Lower leg skin (tissue), 4 donors: ENCODE measurements at regions of chr1 and their contacts with region 1.

Region 1: GRCh38 chr1:205834751-205835150 is 15.2 kb downstream of the PM20D1 start:
- DNase-seq: no peak
- H3K4me3 ChIP-seq: no peak overlapping the region
- CTCF ChIP-seq: no peak
- POLR2A ChIP-seq: no peak

Region 2: GRCh38 chr1:204032632-204033235 is 1802.0 kb before region 1 on chr1:
- intact Hi-C with region 1: no loop called
- DNase-seq: no peak
- H3K4me3 ChIP-seq: no peak overlapping the region
- CTCF ChIP-seq: no peak
- POLR2A ChIP-seq: no peak

Region 3: GRCh38 chr1:205042911-205043806 is 791.6 kb before region 1 on chr1 and contains the start of gene CNTN2:
- intact Hi-C with region 1: no loop called
- DNase-seq: no peak
- H3K4me3 ChIP-seq: no peak within 1 kb of the TSS
- CTCF ChIP-seq: no peak
- POLR2A ChIP-seq: no peak
- total RNA-seq, gene CNTN2: 2.7 to 18.3 (median 6.0) TPM

Region 4: DNA sequence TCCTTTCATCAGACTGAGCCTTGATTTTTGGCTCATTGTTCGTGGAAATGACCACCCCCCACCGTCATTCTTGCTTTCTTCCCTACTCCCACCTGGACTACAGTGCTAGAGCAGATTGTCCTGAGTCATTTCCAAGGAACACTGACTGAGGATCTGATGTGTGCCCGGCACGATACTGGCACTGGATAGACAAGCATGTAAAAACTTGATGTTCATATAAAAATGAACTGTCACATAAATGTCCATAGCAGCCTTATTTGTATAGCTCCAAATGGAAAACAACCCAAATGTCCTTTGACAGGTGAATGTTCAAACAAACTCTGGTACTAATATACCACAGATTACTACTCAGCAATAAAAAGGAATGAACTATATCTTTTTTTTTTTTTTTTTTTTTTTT is 135.8 kb before region 1 on chr1:
- intact Hi-C with region 1: loop called (anchors 5 kb)
- DNase-seq: no peak
- H3K4me3 ChIP-seq: no peak overlapping the region
- CTCF ChIP-seq: no peak
- POLR2A ChIP-seq: no peak